ENCODE measurements at regions of chr7 and their contacts with region 1.

Region 1: DNA sequence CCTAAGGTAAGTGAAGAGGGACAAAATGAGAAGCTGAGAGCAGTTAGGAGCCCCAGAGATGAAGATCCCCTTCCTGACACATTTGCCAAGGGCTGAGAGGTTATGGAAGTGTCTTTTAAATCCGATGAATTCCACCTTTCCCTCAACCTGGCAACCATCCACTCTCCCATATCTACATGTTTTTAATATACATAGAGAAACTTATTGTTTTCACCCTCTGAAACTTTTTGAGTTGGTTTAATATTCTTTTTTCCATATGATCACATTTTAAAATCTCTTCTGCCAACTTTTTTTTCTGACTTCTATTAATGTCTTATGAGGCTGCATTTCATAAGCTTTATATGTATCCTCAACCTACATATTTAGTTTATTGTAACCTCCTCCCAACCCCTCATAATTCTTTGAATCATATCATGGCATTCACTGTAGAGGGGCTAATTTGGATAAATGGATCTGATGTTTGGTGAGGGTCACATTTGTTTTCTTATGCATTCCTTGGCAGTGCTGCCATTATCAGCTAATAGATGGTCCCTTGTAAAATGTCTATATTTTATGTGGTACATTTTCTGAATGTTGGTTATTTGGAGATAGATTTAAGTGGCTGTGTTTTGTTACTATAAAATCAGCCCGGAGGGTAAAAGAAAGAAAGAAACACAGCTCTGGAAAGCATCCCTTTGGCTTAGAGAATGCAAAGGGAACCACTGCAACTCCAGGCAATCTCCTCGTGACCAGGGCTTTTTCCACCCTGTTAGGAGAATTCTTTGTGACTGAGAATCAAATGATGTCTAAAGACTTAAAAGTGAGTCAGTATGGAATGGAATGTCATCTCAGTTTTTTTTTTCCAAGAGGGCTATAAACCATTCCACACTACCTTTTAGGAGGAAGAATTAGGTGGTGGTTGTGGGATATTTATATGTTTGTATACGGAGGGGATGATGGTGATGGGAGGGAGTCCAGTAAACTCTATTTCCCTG is 334.4 kb downstream of the SUGCT start:
- DNase-seq: no peak

Region 2: GRCh38 chr7:40541336-40541735 is 72.2 kb after region 1 on chr7:
- intact Hi-C with region 1: loop called in 1 of 2 experiments (anchors 2 kb)
- DNase-seq: no peak